Ascending aorta (tissue), 2 donors: ENCODE measurements at regions of chr6 and their contacts with region 1.

Region 1: GRCh38 chr6:84774157-84774984 is 10.0 kb upstream of the TBX18 start:
- DNase-seq: peak in 1 of 2 donors; percentile 84
- H3K4me3 ChIP-seq: peak overlapping the region; percentile 61 to 74
- H3K27ac ChIP-seq: peak overlapping the region; percentile 93 to 95
- H3K4me1 ChIP-seq: no peaks in the 10 kb centered on the region
- H3K27me3 ChIP-seq: no peaks in the 10 kb centered on the region
- CTCF ChIP-seq: peak; percentile 65 to 81 (median 81)

Region 2: GRCh38 chr6:84227434-84228197 is 546.8 kb before region 1 on chr6 and contains the start of gene CEP162:
- intact Hi-C with region 1: loop called (anchors 2 kb)
- DNase-seq: peak; percentile 77 to 96
- H3K4me3 ChIP-seq: peak within 1 kb of the TSS; percentile 90 to 96
- H3K27ac ChIP-seq: peak within 1 kb of the TSS; percentile 76 to 77
- H3K4me1 ChIP-seq: no peaks in the 10 kb centered on the region
- H3K27me3 ChIP-seq: no peaks in the 10 kb centered on the region
- CTCF ChIP-seq: peak; percentile 72 to 82 (median 77)
- total RNA-seq, gene CEP162: 11.7 TPM

Region 3: DNA sequence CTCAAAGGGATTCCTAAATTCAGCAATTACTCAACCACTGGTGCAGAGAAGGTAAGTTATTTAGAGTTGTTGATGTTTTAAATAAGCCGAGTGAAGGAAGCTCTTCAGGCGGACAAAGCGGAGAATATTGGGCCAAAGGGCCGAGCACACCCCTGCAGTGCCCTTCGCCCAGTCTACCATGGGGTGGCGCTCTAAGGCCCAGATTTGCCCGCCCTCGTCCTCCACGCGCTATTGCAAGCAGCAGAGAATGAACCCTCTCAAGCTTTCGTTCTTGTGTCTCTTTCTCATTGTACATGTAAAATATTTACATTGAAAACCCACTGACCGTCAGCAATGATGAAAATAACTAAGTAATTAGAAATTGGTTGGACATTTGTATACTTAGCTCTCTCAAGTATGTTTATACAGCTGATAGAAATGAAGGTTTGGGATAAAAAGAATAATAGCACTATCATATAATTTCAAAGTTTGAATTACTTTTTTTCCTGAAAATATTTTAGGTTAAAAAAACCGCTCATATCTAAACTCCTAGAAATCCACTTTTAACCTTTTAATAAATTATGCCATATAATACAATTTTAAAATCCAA is 351.9 kb before region 1 on chr6:
- intact Hi-C with region 1: loop called (anchors 1 kb)
- DNase-seq: peak in 1 of 2 donors; percentile 81
- H3K4me3 ChIP-seq: peak overlapping the region in 1 of 2 donors; percentile 8
- H3K27ac ChIP-seq: no peak overlapping the region
- H3K4me1 ChIP-seq: peaks cover 0 to 11% of the 10 kb centered on the region in 2 donors
- H3K27me3 ChIP-seq: no peaks in the 10 kb centered on the region
- CTCF ChIP-seq: peak; percentile 73 to 88 (median 76)

Region 4: DNA sequence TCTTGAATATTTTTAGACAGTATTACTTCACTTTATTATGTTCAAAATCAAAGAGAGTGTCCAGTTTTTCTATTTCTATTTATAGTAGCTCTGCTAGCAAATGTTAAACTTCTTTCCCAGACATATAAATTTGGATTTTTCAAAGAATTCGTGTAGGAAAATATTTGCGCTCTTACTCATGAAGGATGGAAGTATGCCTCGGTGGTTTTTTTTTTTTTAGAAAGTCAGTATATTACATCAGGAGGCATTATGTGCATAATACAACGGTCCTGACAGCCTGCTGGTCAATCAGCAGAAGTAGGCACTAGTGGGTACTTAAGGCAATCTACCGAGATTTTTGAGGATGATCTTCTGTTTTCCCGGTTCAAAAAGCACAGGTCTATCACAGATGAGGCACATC is 259.3 kb before region 1 on chr6:
- intact Hi-C with region 1: loop called (anchors 2 kb)
- DNase-seq: no peak
- H3K4me3 ChIP-seq: peak overlapping the region in 1 of 2 donors; percentile 28
- H3K27ac ChIP-seq: peak overlapping the region; percentile 68 to 73
- H3K4me1 ChIP-seq: peaks cover 0 to 29% of the 10 kb centered on the region in 2 donors
- H3K27me3 ChIP-seq: no peaks in the 10 kb centered on the region
- CTCF ChIP-seq: no peak

Region 5: GRCh38 chr6:84825461-84825860 is 51.1 kb after region 1 on chr6:
- intact Hi-C with region 1: no loop called
- DNase-seq: no peak
- H3K4me3 ChIP-seq: no peak overlapping the region
- H3K27ac ChIP-seq: no peak overlapping the region
- H3K4me1 ChIP-seq: no peaks in the 10 kb centered on the region
- H3K27me3 ChIP-seq: no peaks in the 10 kb centered on the region
- CTCF ChIP-seq: no peak

Region 6: GRCh38 chr6:85163156-85164080 is 389.0 kb after region 1 on chr6:
- intact Hi-C with region 1: no loop called
- DNase-seq: no peak
- H3K4me3 ChIP-seq: no peak overlapping the region
- H3K27ac ChIP-seq: no peak overlapping the region
- H3K4me1 ChIP-seq: no peaks in the 10 kb centered on the region
- H3K27me3 ChIP-seq: no peaks in the 10 kb centered on the region
- CTCF ChIP-seq: no peak

Region 7: GRCh38 chr6:85460921-85461797 is 686.8 kb after region 1 on chr6:
- intact Hi-C with region 1: loop called (anchors 5 kb)
- DNase-seq: no peak
- H3K4me3 ChIP-seq: no peak overlapping the region
- H3K27ac ChIP-seq: peak overlapping the region; percentile 90 to 93
- H3K4me1 ChIP-seq: peaks cover 19 to 82% of the 10 kb centered on the region in 2 donors
- H3K27me3 ChIP-seq: no peaks in the 10 kb centered on the region
- CTCF ChIP-seq: no peak